Naive thymus-derived CD8-positive, alpha-beta T cell (primary cell): ENCODE measurements at regions of chr12 and their contacts with region 1.

Region 1: GRCh38 chr12:21677622-21678277 is 20.1 kb upstream of the LDHB start:
- DNase-seq: peak in 5 of 10 donors; percentile 5 to 50 (median 33)
- ATAC-seq: peak; percentile 60 to 65
- H3K4me3 Mint-ChIP-seq: peak overlapping the region; percentile 68 to 91 (median 78)
- H3K27ac Mint-ChIP-seq: peak overlapping the region; percentile 9 to 98 (median 88)
- H3K4me1 Mint-ChIP-seq: peaks cover 34 to 57% (median 51%) of the 10 kb centered on the region in 4 donors
- H3K27me3 Mint-ChIP-seq: no peaks in the 10 kb centered on the region

Region 2: GRCh38 chr12:21607701-21608100 is 70.0 kb before region 1 on chr12:
- POLR2A ChIA-PET with region 1: interaction called, 19 read pairs
- DNase-seq: peak in 3 of 10 donors; percentile 36 to 45 (median 40)
- ATAC-seq: peak in 1 of 2 donors; percentile 73
- H3K4me3 Mint-ChIP-seq: no peak overlapping the region
- H3K27ac Mint-ChIP-seq: no peak overlapping the region
- H3K4me1 Mint-ChIP-seq: peaks cover 2 to 8% (median 6%) of the 10 kb centered on the region in 4 donors
- H3K27me3 Mint-ChIP-seq: peaks cover 0 to 1% (median 0%) of the 10 kb centered on the region in 5 donors

Region 3: DNA sequence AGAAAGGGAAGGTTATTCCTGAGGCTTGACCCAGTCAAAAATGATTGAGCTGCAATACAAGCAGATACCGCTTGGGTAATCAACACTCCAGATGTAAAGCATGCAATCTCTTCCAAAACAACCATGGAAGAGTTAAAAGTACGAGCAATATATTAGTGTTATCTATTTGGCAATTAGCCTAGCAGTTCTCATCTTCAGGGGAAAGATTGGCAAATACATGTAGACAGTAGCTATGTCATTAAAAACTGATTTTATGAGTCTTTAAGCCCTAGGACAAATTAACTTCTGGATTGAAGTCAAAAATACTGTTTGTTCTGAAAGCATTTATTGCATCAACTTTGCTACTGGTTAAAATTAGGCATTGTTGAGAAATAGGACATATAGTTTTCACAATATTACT is 63.8 kb before region 1 on chr12:
- POLR2A ChIA-PET with region 1: interaction called, 19 read pairs
- DNase-seq: no peak
- ATAC-seq: no peak
- H3K4me3 Mint-ChIP-seq: peak overlapping the region in 8 of 10 donors; percentile 21 to 77 (median 60)
- H3K27ac Mint-ChIP-seq: peak overlapping the region; percentile 65 to 98 (median 93)
- H3K4me1 Mint-ChIP-seq: peaks cover 25 to 60% (median 58%) of the 10 kb centered on the region in 4 donors
- H3K27me3 Mint-ChIP-seq: no peaks in the 10 kb centered on the region

Region 4: GRCh38 chr12:21631367-21631766 is 46.4 kb before region 1 on chr12:
- POLR2A ChIA-PET with region 1: no interaction called
- DNase-seq: no peak
- ATAC-seq: no peak
- H3K4me3 Mint-ChIP-seq: no peak overlapping the region
- H3K27ac Mint-ChIP-seq: peak overlapping the region in 4 of 10 donors; percentile 50 to 70 (median 56)
- H3K4me1 Mint-ChIP-seq: peaks cover 0 to 16% (median 8%) of the 10 kb centered on the region in 4 donors
- H3K27me3 Mint-ChIP-seq: no peaks in the 10 kb centered on the region

Region 5: GRCh38 chr12:21650833-21651396 is 26.8 kb before region 1 on chr12:
- POLR2A ChIA-PET with region 1: interaction called, 14 read pairs
- DNase-seq: no peak
- ATAC-seq: no peak
- H3K4me3 Mint-ChIP-seq: peak overlapping the region; percentile 4 to 89 (median 68)
- H3K27ac Mint-ChIP-seq: peak overlapping the region in 9 of 10 donors; percentile 13 to 83 (median 70)
- H3K4me1 Mint-ChIP-seq: peaks cover 47 to 96% (median 87%) of the 10 kb centered on the region in 4 donors
- H3K27me3 Mint-ChIP-seq: no peaks in the 10 kb centered on the region

Region 6: DNA sequence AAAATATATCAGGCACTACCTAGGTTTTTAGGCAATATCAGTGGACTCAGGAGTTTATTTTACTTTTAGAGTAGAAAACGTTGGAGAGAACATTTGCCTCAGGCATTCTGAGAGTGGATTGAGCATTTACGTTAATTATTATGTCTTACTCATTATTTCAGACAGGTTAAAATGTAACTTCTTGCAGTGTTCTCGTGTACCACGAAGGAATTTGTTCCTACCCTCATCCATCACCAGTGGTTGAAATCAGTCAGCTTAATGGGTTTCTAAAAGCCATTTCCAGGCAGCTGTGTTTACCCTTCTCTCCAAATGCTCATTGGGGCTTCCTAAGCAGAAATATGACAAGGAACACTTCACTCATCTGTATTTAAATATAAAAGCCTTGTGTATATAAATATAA is 11.0 kb before region 1 on chr12:
- POLR2A ChIA-PET with region 1: interaction called, 15 read pairs
- DNase-seq: no peak
- ATAC-seq: no peak
- H3K4me3 Mint-ChIP-seq: no peak overlapping the region
- H3K27ac Mint-ChIP-seq: no peak overlapping the region
- H3K4me1 Mint-ChIP-seq: peaks cover 0 to 6% (median 1%) of the 10 kb centered on the region in 4 donors
- H3K27me3 Mint-ChIP-seq: peaks cover 0 to 3% (median 0%) of the 10 kb centered on the region in 5 donors

Region 7: GRCh38 chr12:21690704-21691368 is 13.1 kb after region 1 on chr12:
- POLR2A ChIA-PET with region 1: interaction called, 16 read pairs
- DNase-seq: peak in 3 of 10 donors; percentile 27 to 57 (median 57)
- ATAC-seq: peak; percentile 67 to 77
- H3K4me3 Mint-ChIP-seq: peak overlapping the region in 9 of 10 donors; percentile 6 to 65 (median 42)
- H3K27ac Mint-ChIP-seq: peak overlapping the region; percentile 17 to 90 (median 77)
- H3K4me1 Mint-ChIP-seq: peaks cover 17 to 24% (median 21%) of the 10 kb centered on the region in 4 donors
- H3K27me3 Mint-ChIP-seq: no peaks in the 10 kb centered on the region

Region 8: GRCh38 chr12:21725754-21726153 is 48.0 kb after region 1 on chr12:
- POLR2A ChIA-PET with region 1: no interaction called
- DNase-seq: no peak
- ATAC-seq: no peak
- H3K4me3 Mint-ChIP-seq: no peak overlapping the region
- H3K27ac Mint-ChIP-seq: no peak overlapping the region
- H3K4me1 Mint-ChIP-seq: no peaks in the 10 kb centered on the region
- H3K27me3 Mint-ChIP-seq: peaks cover 0 to 13% (median 8%) of the 10 kb centered on the region in 5 donors